CD4-positive, alpha-beta T cell (primary cell): ENCODE measurements at regions of chr6 and their contacts with region 1.

Region 1: DNA sequence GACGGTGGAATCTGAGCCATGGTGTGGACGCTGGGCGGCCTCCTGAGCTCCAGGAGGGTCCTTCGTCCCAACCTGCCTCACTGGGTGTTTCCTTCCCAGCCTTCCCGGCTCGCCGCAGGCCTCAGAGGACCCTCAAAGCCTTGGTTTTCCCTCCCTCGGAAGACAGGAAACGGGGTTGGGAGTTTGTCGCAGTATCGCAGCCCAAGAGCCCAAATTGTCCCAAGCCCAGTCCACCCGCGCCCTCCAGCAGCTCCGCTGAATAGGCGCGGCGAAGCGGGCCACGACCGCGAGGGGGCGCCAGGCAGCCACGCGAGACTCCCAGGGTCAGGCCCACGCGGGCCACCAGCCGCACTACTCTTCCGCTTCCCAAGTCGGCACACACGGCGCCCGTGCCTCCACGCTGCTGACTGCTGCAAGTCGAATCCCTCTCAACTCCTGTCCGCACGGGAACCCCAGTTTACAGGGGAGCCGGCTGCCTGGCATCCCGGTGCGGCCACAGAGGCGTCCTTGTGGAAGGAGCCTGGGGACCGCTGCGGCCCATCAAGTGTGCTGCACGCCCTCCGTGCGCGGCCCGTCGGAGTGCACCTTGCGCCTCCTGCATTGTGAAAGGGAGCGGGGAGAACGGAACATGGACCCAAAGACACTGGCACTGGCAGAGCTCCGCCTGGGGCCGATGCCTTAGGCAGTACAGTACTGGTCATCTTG is 40.4 kb upstream of the HMGA1 start:
- DNase-seq: peak; percentile 79 to 96 (median 90)
- ATAC-seq: peak; percentile 99
- H3K4me3 ChIP-seq: peak overlapping the region; percentile 64
- H3K4me3 Mint-ChIP-seq: peak overlapping the region; percentile 86
- H3K27ac ChIP-seq: no peak overlapping the region
- H3K27ac Mint-ChIP-seq: no peak overlapping the region
- H3K4me1 ChIP-seq: peaks cover 12% of the 10 kb centered on the region
- H3K4me1 Mint-ChIP-seq: peaks cover 7% of the 10 kb centered on the region
- H3K27me3 ChIP-seq: no peaks in the 10 kb centered on the region
- H3K27me3 Mint-ChIP-seq: no peaks in the 10 kb centered on the region
- CTCF ChIP-seq: peak; percentile 98

Region 2: DNA sequence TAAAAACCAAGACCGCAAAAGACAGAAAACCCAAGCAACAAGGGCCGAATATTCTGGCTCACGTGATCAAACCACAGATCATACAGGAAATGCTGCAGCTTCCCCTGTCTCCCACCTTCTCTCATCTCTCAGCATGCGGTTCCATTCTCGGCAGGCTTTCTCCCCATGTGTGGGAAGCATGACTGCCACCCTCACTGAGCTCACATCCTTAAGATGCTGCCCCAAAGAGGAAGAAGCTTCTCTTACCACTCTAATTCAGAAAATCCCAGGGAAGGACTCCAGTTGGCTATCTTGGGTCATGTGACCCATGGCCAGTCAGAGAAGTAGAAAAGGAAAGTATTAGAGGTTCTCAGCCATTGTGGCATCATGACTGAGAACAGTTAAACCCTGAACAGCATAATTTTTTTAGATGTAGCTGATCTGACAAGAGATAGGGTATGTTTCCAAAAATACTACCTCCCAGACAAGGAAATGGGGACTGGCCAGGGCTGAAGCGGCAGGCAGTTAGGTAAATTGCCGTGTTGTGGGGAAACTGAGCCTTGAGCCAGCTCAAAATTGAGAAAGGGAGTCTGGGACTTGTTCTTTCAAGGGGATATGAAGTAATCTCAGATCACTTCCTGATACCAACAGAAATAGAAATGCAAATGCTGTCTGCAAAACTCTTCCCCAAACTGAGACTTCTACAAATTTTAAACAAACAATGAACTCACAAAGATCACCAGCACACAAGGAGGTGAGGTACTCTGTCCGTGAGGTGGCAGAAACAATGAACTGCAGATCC is 13.3 kb before region 1 on chr6:
- CTCF ChIA-PET with region 1: interaction called, 10 read pairs
- POLR2A ChIA-PET with region 1: interaction called, 8 read pairs
- intact Hi-C with region 1: no loop called
- DNase-seq: peak; percentile 43 to 93 (median 63)
- ATAC-seq: peak; percentile 94
- H3K4me3 ChIP-seq: peak overlapping the region; percentile 13
- H3K4me3 Mint-ChIP-seq: peak overlapping the region; percentile 39
- H3K27ac ChIP-seq: peak overlapping the region; percentile 58 to 61
- H3K27ac Mint-ChIP-seq: peak overlapping the region; percentile 74
- H3K4me1 ChIP-seq: peaks cover 39% of the 10 kb centered on the region
- H3K4me1 Mint-ChIP-seq: peaks cover 31% of the 10 kb centered on the region
- H3K27me3 ChIP-seq: no peaks in the 10 kb centered on the region
- H3K27me3 Mint-ChIP-seq: no peaks in the 10 kb centered on the region
- CTCF ChIP-seq: no peak

Region 3: GRCh38 chr6:34392497-34393190 is 196.4 kb after region 1 on chr6 and contains the start of gene NUDT3:
- CTCF ChIA-PET with region 1: interaction called, 10 read pairs
- POLR2A ChIA-PET with region 1: interaction called, 11 read pairs
- intact Hi-C with region 1: loop called (anchors 1 to 2 kb)
- DNase-seq: peak; percentile 86 to 98 (median 92)
- ATAC-seq: peak; percentile 87
- H3K4me3 ChIP-seq: peak within 1 kb of the TSS; percentile 83
- H3K4me3 Mint-ChIP-seq: peak within 1 kb of the TSS; percentile 96
- H3K27ac ChIP-seq: peak within 1 kb of the TSS; percentile 41 to 87
- H3K27ac Mint-ChIP-seq: no peak within 1 kb of the TSS
- H3K4me1 ChIP-seq: peaks cover 29% of the 10 kb centered on the region
- H3K4me1 Mint-ChIP-seq: peaks cover 31% of the 10 kb centered on the region
- H3K27me3 ChIP-seq: no peaks in the 10 kb centered on the region
- H3K27me3 Mint-ChIP-seq: no peaks in the 10 kb centered on the region
- CTCF ChIP-seq: peak; percentile 89
- total RNA-seq, gene NUDT3: 14.8 to 15.0 TPM

Region 4: DNA sequence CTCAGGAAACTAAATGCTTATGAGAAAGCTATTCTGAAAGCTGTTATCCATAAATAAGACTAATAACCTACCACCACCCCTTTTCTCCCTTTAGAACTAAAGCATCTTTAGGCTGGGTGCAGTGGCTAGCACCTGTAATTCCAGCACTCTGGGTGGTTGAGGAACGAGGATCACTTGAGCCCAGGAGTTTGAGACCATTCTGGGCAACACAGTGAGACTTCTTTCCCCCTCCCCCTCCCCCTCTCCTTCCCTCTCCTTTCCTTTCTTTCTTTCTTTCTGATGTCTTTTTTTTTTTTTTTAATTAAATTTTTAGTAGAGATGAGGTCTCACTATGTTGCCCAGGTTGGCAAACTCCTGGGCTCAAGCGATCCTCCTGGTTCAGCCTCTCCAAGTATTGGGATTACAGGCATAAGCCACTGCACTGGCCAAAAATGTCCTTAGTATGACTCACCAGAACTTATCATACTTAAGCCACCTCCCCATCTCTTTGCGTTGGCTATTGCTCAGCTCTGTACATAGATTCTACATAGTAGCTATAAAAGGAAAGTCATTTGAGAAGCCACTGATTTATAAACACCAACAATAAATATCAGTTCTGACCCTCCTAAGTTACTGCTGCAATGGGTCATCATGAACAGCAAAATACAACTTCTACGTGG is 414.7 kb after region 1 on chr6:
- CTCF ChIA-PET with region 1: interaction called, 12 read pairs
- POLR2A ChIA-PET with region 1: interaction called, 6 read pairs
- intact Hi-C with region 1: loop called (anchors 1 to 5 kb)
- DNase-seq: no peak
- ATAC-seq: no peak
- H3K4me3 ChIP-seq: no peak overlapping the region
- H3K4me3 Mint-ChIP-seq: no peak overlapping the region
- H3K27ac ChIP-seq: no peak overlapping the region
- H3K27ac Mint-ChIP-seq: no peak overlapping the region
- H3K4me1 ChIP-seq: peaks cover 2% of the 10 kb centered on the region
- H3K4me1 Mint-ChIP-seq: peaks cover 23% of the 10 kb centered on the region
- H3K27me3 ChIP-seq: no peaks in the 10 kb centered on the region
- H3K27me3 Mint-ChIP-seq: no peaks in the 10 kb centered on the region
- CTCF ChIP-seq: no peak

Region 5: GRCh38 chr6:35240840-35241801 is 1044.8 kb after region 1 on chr6:
- CTCF ChIA-PET with region 1: no interaction called
- POLR2A ChIA-PET with region 1: no interaction called
- intact Hi-C with region 1: loop called in 1 of 2 experiments (anchors 5 kb)
- DNase-seq: peak; percentile 58 to 81 (median 70)
- ATAC-seq: peak; percentile 93
- H3K4me3 ChIP-seq: no peak overlapping the region
- H3K4me3 Mint-ChIP-seq: no peak overlapping the region
- H3K27ac ChIP-seq: no peak overlapping the region
- H3K27ac Mint-ChIP-seq: no peak overlapping the region
- H3K4me1 ChIP-seq: peaks cover 6% of the 10 kb centered on the region
- H3K4me1 Mint-ChIP-seq: peaks cover 4% of the 10 kb centered on the region
- H3K27me3 ChIP-seq: no peaks in the 10 kb centered on the region
- H3K27me3 Mint-ChIP-seq: no peaks in the 10 kb centered on the region
- CTCF ChIP-seq: peak; percentile 94